ENCODE measurements at regions of chr17 and their contacts with region 1.

Region 1: GRCh38 chr17:66541461-66542128 is 239.2 kb downstream of the PRKCA start:
- DNase-seq: no peak
- H3K4me3 Mint-ChIP-seq: no peak overlapping the region
- H3K27ac Mint-ChIP-seq: peak overlapping the region; percentile 83
- H3K4me1 Mint-ChIP-seq: peaks cover 54% of the 10 kb centered on the region
- H3K27me3 Mint-ChIP-seq: no peaks in the 10 kb centered on the region

Region 2: GRCh38 chr17:65047942-65048341 is 1493.7 kb before region 1 on chr17:
- intact Hi-C with region 1: no loop called
- DNase-seq: no peak
- H3K4me3 Mint-ChIP-seq: no peak overlapping the region
- H3K27ac Mint-ChIP-seq: peak overlapping the region; percentile 44
- H3K4me1 Mint-ChIP-seq: peaks cover 54% of the 10 kb centered on the region
- H3K27me3 Mint-ChIP-seq: no peaks in the 10 kb centered on the region

Region 3: DNA sequence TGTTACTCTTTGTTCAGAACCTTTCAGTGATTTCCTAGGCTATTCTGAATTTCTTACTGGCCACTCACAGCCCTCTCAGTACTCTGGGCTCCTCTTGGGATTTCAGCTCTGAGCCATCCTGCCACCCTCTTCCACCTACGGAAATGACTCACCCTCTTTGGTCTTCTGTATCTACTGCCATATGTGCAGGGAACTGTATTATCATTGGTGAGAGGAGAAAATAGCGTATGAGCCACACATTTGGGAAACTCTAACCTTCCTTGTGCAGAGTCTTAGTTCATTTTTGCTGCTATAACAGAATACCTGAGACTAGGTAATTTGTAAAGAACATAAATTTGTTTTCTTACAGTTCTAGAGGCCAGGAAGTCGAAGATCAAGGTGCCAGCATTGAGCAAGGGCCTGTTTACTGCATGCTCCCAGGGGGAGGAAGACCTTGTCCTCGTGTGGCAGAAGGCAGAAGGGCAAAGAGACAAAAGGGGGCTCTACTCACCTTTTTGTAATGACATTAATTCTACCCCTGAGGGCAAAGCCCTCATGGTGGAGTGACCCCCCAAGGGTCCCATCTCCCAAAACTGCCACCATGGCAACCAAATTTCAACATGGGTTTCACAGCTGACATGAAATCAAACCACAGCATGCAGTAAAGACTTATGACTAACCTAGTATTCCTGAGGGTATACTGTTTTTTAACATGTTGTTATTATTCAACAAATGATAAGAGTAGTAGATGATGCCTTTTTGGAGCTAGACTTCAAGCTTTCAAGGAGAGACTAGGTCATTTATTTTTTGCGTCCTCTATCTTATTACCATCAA is 47.4 kb before region 1 on chr17:
- intact Hi-C with region 1: loop called (anchors 10 kb)
- DNase-seq: no peak
- H3K4me3 Mint-ChIP-seq: peak overlapping the region; percentile 19
- H3K27ac Mint-ChIP-seq: peak overlapping the region; percentile 71
- H3K4me1 Mint-ChIP-seq: peaks cover 46% of the 10 kb centered on the region
- H3K27me3 Mint-ChIP-seq: no peaks in the 10 kb centered on the region

Region 4: GRCh38 chr17:66523378-66524200 is 18.0 kb before region 1 on chr17:
- intact Hi-C with region 1: loop called (anchors 2 kb)
- DNase-seq: no peak
- H3K4me3 Mint-ChIP-seq: no peak overlapping the region
- H3K27ac Mint-ChIP-seq: peak overlapping the region; percentile 47
- H3K4me1 Mint-ChIP-seq: peaks cover 81% of the 10 kb centered on the region
- H3K27me3 Mint-ChIP-seq: no peaks in the 10 kb centered on the region